Body of pancreas (tissue), 4 donors: ENCODE measurements at regions of chr11 and their contacts with region 1.

Region 1: DNA sequence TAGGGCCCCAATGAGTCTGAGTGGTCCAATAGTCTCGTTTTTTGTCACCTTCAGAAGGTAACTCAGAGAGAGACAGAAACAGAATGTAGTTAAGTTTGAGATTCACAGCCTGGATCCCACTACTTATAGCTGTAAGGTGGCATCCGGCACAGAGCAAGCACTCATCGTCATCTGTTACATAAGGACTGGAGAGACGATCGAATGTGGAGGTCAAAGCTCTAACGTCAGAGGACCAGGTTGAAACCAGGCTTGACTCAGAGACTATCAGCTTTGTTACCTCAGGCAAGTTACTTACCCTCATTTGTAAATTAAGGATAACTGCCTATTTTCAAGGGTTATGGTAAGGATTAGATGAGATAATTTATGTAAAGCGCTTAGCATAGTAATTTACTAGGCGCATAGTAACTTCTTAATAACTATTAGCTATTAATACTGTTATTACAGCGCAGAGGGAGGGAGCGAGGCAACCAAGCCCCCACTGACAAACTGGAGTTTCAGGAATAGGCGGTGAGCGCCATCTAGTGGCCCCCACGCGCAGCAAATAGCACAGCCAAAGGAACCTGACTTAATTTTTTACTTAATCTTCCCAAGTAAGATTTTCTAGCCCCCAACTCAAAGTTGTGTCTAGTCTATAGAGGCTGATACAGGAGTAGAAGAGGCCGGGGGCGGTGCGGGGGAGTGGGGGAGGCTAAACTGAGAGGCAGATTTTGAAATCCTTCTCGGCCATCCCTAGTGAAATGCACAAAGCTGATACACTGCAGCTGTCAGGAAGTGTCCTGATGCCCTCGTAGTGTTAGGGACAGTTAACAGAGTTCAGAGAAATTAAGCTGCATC is 29.0 kb upstream of the API5 start:
- DNase-seq: peak; percentile 18 to 56 (median 39)
- ATAC-seq: no peak
- H3K4me3 ChIP-seq: no peak overlapping the region
- H3K27ac ChIP-seq: no peak overlapping the region
- H3K4me1 ChIP-seq: peaks cover 7% of the 10 kb centered on the region
- H3K27me3 ChIP-seq: peaks cover 0 to 4% of the 10 kb centered on the region in 2 donors
- CTCF ChIP-seq: peak; percentile 68 to 93 (median 75)
- POLR2A ChIP-seq: no peak

Region 2: GRCh38 chr11:42770444-42771065 is 512.3 kb before region 1 on chr11:
- intact Hi-C with region 1: loop called (anchors 10 kb)
- DNase-seq: peak; percentile 12 to 42 (median 20)
- ATAC-seq: no peak
- H3K4me3 ChIP-seq: no peak overlapping the region
- H3K27ac ChIP-seq: no peak overlapping the region
- H3K4me1 ChIP-seq: no peaks in the 10 kb centered on the region
- H3K27me3 ChIP-seq: no peaks in the 10 kb centered on the region
- CTCF ChIP-seq: peak in 6 of 7 experiments; percentile 48 to 59 (median 52)
- POLR2A ChIP-seq: no peak

Region 3: DNA sequence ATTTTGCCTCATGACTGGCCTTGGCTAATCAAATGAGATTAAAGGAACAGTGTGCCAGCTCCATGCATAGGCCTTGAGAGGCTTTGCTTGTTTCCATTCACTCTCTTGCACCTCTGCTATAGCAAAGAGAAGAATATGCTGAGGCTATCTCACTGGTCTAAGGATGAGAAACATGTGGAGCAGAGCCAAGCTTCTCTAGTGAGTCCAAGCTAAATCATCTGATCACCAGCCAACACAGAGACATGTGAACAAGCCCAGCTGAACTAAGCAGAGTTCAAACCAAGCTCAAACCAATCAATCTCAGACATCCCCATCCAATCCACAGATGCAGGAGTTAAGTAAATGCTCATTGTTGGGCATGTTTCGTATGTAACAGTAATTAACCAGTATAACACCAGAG is 40.4 kb before region 1 on chr11:
- intact Hi-C with region 1: no loop called
- DNase-seq: peak in 1 of 4 donors; percentile 2
- ATAC-seq: no peak
- H3K4me3 ChIP-seq: no peak overlapping the region
- H3K27ac ChIP-seq: no peak overlapping the region
- H3K4me1 ChIP-seq: peaks cover 13% of the 10 kb centered on the region
- H3K27me3 ChIP-seq: no peaks in the 10 kb centered on the region
- CTCF ChIP-seq: no peak
- POLR2A ChIP-seq: no peak